ENCODE measurements at regions of chr4 and their contacts with region 1.

Region 1: DNA sequence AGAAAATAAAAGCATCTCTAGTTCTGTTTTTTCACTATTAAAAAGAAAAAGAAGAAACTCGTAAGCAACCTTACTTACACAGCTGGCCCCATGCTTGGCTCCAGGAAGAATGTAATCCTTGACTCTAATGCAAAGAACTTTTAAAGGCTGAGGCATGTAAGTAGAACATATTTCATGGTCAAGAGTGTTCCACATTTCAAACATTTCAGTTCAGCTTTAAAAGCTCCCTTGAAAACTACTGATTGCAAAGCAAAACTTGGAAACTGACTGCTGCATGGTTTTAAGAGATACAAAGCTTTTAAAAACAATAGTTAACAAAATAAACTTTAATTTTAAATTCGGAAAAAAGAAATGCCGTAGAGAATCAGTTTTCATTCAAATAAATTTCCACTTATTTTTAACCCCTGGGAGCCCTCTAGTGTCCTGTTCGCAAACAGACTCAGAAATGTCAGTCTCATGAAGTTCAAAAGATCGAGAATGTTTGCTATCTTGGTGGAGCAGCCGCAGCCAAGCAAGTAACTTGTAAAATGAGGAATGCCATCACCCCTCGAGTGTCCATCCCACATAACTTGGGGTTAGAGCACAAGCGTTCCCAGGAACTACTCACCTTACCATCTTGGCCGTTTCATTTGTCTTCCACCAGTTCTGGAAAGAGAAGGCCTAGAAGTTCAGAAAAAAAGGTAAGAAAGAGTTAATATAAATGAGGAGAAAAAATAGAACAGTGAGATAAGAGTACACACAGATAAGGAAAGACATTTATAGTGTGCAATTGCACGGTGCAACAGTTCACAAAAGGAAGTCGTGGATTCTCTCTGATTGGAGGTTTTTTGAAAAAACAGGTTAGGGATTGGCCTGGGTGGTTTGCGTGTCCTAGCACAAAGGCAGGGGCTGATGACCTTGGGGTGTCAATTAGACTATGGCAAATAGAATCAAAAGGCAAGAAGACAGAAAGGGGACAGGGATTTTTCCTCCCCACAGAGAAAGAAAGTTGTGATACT is at the start of gene GASK1B:
- DNase-seq: no peak
- total RNA-seq, gene GASK1B: 90.6 TPM

Region 2: GRCh38 chr4:157992038-157992705 is 180.4 kb before region 1 on chr4:
- intact Hi-C with region 1: loop called (anchors 1 kb)
- DNase-seq: no peak

Region 3: DNA sequence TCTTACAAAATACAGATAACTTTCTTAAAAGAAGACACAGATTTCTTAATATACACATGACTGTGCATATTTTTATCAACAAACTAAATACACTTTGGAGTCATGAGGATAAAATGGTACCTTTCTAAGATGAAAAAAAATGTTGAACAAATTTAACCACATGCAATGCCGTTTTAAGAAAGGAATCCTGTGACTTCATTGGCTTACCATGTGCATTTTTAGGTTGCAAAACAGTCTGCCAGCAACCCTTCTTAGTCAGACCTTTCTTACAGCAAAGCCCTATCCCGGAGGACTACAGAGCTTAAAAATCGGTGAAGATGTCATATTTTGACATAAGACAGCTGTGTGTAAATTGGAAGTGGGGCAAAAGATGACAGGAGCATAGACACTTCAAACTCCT is 51.4 kb before region 1 on chr4:
- intact Hi-C with region 1: loop called (anchors 5 kb)
- DNase-seq: no peak

Region 4: GRCh38 chr4:158209825-158210807 is 37.6 kb after region 1 on chr4 and contains the start of gene TMEM144:
- intact Hi-C with region 1: loop called (anchors 2 kb)
- DNase-seq: peak; percentile 96
- total RNA-seq, gene TMEM144: 14.6 TPM

Measured in cardiac septum (tissue), 1 donor.